Right ventricle myocardium inferior (tissue), 1 donor: ENCODE measurements at regions of chr1 and their contacts with region 1.

Region 1: GRCh38 chr1:86507935-86508582 is 38.8 kb upstream of the CLCA4 start:
- DNase-seq: no peak
- ATAC-seq: no peak

Region 2: GRCh38 chr1:86395771-86396497 is 112.1 kb before region 1 on chr1 and contains the start of gene ODF2L:
- intact Hi-C with region 1: loop called (anchors 5 kb)
- DNase-seq: peak; percentile 96
- ATAC-seq: peak; percentile 100
- total RNA-seq, gene ODF2L: 5.1 TPM

Region 3: GRCh38 chr1:86470859-86471258 is 37.2 kb before region 1 on chr1:
- intact Hi-C with region 1: loop called (anchors 5 kb)
- DNase-seq: no peak
- ATAC-seq: no peak